PC-3 (cell line): ENCODE measurements at regions of chr10 and their contacts with region 1.

Region 1: GRCh38 chr10:126521354-126521753 is 133.1 kb upstream of the ADAM12 start:
- DNase-seq: peak; percentile 86
- ATAC-seq: peak; percentile 98
- H3K4me3 ChIP-seq: no peak overlapping the region
- H3K27ac ChIP-seq: peak overlapping the region; percentile 68
- H3K4me1 ChIP-seq: peaks cover 9% of the 10 kb centered on the region
- H3K27me3 ChIP-seq: no peaks in the 10 kb centered on the region
- CTCF ChIP-seq: no peak

Region 2: DNA sequence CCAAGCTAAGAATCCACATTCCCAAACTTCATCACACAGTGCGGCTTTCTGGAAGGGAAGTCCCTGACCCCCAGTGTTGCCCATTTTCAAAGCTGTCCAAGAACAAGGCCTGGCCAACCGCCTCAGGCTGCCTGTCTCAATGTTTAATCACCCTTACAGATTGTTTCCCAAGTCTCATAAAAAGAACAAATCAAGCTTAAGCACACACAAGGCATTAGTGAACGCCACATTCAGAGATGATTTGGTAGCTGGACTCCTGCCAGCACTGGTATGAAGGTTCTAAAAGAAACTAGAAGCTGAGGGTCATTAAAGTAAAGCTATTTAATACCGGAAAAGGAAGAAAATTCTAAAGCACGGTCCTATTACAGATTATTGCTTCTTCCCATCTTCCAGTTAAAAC is 113.6 kb after region 1 on chr10:
- CTCF ChIA-PET with region 1: no interaction called
- POLR2A ChIA-PET with region 1: no interaction called
- intact Hi-C with region 1: loop called (anchors 1 kb)
- DNase-seq: peak; percentile 94
- ATAC-seq: peak; percentile 89
- H3K4me3 ChIP-seq: peak overlapping the region; percentile 33; the same call in 1 of the 2 replicates
- H3K27ac ChIP-seq: peak overlapping the region; percentile 99
- H3K4me1 ChIP-seq: peaks cover 23% of the 10 kb centered on the region
- H3K27me3 ChIP-seq: no peaks in the 10 kb centered on the region
- CTCF ChIP-seq: no peak

Region 3: DNA sequence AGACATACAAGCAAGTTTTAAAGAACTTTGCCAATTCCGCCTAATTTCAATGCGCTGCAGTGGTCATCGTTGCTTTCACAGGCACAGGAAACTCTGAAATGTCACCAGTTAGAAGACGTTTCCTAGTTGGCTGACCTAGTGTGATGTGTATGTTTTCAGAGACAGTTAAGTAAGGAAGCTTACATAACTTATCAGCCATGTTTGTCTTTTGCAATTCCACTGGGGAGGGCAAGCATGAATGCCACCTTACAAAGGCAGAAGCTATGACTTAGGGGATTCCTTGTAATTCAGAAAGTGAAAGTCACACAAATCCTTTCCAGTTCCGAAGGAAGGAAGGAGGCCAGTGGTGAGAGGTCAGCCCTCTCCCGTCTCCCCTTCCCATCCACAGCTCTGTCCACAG is 1012.7 kb after region 1 on chr10:
- CTCF ChIA-PET with region 1: no interaction called
- POLR2A ChIA-PET with region 1: no interaction called
- intact Hi-C with region 1: no loop called
- DNase-seq: no peak
- ATAC-seq: no peak
- H3K4me3 ChIP-seq: no peak overlapping the region
- H3K27ac ChIP-seq: no peak overlapping the region
- H3K4me1 ChIP-seq: no peaks in the 10 kb centered on the region
- H3K27me3 ChIP-seq: peaks cover 13% of the 10 kb centered on the region
- CTCF ChIP-seq: no peak